ENCODE measurements at regions of chr2 and their contacts with region 1.

Region 1: DNA sequence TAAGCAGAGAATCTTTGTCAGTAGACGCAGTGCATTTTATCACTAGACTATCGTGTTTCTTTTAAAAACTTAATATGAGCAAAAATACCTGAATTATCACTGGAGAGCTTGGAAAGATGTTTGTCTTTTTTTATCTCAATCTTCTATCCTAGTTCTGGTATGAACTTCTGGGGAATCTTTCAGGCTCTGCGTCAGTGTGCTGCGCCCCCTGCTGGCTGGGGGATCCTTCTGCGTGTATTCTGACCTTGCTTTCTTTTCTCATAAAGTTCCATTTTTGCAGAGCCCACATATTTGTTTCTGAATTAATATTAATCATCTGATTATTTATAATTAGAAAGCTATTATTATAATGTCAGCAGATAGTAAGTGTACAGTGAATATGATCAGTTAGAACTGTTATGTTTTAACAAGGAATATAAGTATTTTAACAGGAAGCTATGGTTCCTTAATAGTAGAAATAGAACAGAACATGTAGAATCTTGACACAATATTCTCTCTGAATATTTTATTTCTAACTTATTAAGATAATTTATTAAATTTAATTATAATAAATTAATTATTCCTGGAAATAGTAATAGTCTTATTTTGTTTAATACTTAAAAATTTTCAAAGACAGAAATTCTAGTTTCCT is 945.0 kb upstream of the CRIM1 start:
- DNase-seq: peak; percentile 57 to 80 (median 74)
- ATAC-seq: no peak
- H3K4me3 ChIP-seq: no peak overlapping the region
- H3K27ac ChIP-seq: no peak overlapping the region
- H3K4me1 ChIP-seq: no peaks in the 10 kb centered on the region
- H3K27me3 ChIP-seq: no peaks in the 10 kb centered on the region

Region 2: DNA sequence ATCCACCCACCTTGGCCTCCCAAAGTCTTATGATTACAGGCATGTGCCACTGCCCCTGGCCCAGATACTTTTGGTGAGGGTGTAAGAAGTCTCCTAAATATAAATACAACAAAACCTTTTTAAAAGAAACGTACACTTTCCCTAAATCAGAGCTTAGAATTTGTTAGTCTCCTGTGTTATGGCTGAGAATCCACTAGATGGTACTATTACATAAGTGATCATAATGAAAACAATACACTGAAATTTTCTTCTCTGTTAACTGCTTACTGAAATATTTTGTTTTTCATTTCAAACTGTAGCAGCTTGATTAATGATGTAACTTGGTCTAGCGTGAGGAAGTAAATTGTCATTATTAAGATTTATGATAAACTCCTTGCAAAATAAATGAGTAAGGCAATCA is 1736.6 kb before region 1 on chr2:
- intact Hi-C with region 1: loop called in 2 of 4 experiments (anchors 10 kb)
- DNase-seq: no peak
- ATAC-seq: no peak
- H3K4me3 ChIP-seq: no peak overlapping the region
- H3K27ac ChIP-seq: no peak overlapping the region
- H3K4me1 ChIP-seq: no peaks in the 10 kb centered on the region
- H3K27me3 ChIP-seq: no peaks in the 10 kb centered on the region

Region 3: DNA sequence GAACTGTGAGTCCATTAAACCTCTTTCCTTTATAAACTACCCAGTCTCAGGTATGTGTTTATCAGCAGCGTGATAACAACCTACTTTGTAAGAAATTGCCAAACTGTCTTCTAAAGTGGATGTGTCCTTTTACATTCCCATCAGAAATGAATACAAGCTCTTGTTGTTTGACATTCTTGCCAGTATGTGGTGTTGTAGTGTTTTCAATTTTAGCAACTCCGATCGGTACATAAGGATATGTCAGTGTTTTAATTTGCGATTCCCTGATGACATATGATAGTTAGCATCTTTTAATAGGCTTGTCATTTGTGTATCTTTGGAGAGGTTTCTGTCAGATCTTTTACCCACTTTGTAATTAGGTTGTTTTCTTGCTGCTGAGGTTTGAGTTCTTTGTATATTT is 211.2 kb before region 1 on chr2:
- intact Hi-C with region 1: no loop called
- DNase-seq: no peak
- ATAC-seq: no peak
- H3K4me3 ChIP-seq: no peak overlapping the region
- H3K27ac ChIP-seq: no peak overlapping the region
- H3K4me1 ChIP-seq: no peaks in the 10 kb centered on the region
- H3K27me3 ChIP-seq: no peaks in the 10 kb centered on the region

Measured in right cardiac atrium (tissue), 5 donors.